ENCODE measurements at regions of chr1 and their contacts with region 1.

Region 1: GRCh38 chr1:174968750-174969244 is 30.9 kb upstream of the CACYBP start:
- DNase-seq: peak in 25 of 35 experiments; percentile 8 to 87 (median 34)
- ATAC-seq: peak; percentile 68 to 74 (median 71)
- H3K4me3 ChIP-seq: peak overlapping the region in 1 of 2 donors; percentile 13
- H3K4me3 Mint-ChIP-seq: peak overlapping the region; percentile 70 to 75 (median 74)
- H3K27ac ChIP-seq: peak overlapping the region; percentile 81
- H3K27ac Mint-ChIP-seq: peak overlapping the region; percentile 93 to 95
- H3K4me1 ChIP-seq: peaks cover 44 to 69% of the 10 kb centered on the region in 2 experiments
- H3K4me1 Mint-ChIP-seq: peaks cover 78 to 82% (median 79%) of the 10 kb centered on the region in 3 donors
- H3K27me3 ChIP-seq: no peaks in the 10 kb centered on the region
- H3K27me3 Mint-ChIP-seq: no peaks in the 10 kb centered on the region

Region 2: GRCh38 chr1:174800216-174800851 is 168.5 kb before region 1 on chr1:
- CTCF ChIA-PET with region 1: interaction called in 1 of 2 experiments, 7 read pairs
- POLR2A ChIA-PET with region 1: interaction called, 4 to 19 read pairs
- DNase-seq: peak in 17 of 35 experiments; percentile 1 to 43 (median 14)
- ATAC-seq: peak; percentile 6 to 14 (median 10)
- H3K4me3 ChIP-seq: peak overlapping the region; percentile 57 to 64
- H3K4me3 Mint-ChIP-seq: no peak overlapping the region
- H3K27ac ChIP-seq: peak overlapping the region; percentile 58
- H3K27ac Mint-ChIP-seq: no peak overlapping the region
- H3K4me1 ChIP-seq: peaks cover 3 to 11% of the 10 kb centered on the region in 2 experiments
- H3K4me1 Mint-ChIP-seq: peaks cover 0 to 16% (median 5%) of the 10 kb centered on the region in 3 donors
- H3K27me3 ChIP-seq: no peaks in the 10 kb centered on the region
- H3K27me3 Mint-ChIP-seq: no peaks in the 10 kb centered on the region

Region 3: DNA sequence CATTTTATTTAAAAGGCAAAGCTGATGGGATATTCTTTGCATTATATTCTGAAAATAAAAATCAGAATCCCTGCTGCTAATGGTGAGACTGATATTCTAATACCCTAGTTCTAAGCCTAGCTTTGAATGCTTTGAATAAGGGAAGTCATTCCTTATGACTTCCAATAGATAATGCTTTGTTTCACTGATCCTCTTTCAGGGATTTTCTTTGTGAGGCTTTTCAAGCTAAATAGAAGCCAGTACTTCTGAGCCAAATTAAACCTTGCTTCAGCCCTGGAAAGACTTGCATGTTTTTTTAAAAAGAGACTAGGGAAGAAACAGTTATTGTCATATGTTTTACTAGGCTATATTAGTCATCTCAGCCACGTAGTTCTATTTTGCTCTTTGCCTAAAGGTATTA is 37.6 kb before region 1 on chr1:
- CTCF ChIA-PET with region 1: no interaction called
- POLR2A ChIA-PET with region 1: no interaction called
- DNase-seq: no peak
- ATAC-seq: no peak
- H3K4me3 ChIP-seq: no peak overlapping the region
- H3K4me3 Mint-ChIP-seq: no peak overlapping the region
- H3K27ac ChIP-seq: no peak overlapping the region
- H3K27ac Mint-ChIP-seq: no peak overlapping the region
- H3K4me1 ChIP-seq: no peaks in the 10 kb centered on the region
- H3K4me1 Mint-ChIP-seq: peaks cover 3 to 6% (median 5%) of the 10 kb centered on the region in 3 donors
- H3K27me3 ChIP-seq: no peaks in the 10 kb centered on the region
- H3K27me3 Mint-ChIP-seq: no peaks in the 10 kb centered on the region

Region 4: GRCh38 chr1:175089136-175089718 is 120.4 kb after region 1 on chr1:
- CTCF ChIA-PET with region 1: no interaction called
- POLR2A ChIA-PET with region 1: no interaction called
- DNase-seq: no peak
- ATAC-seq: no peak
- H3K4me3 ChIP-seq: no peak overlapping the region
- H3K4me3 Mint-ChIP-seq: no peak overlapping the region
- H3K27ac ChIP-seq: no peak overlapping the region
- H3K27ac Mint-ChIP-seq: no peak overlapping the region
- H3K4me1 ChIP-seq: no peaks in the 10 kb centered on the region
- H3K4me1 Mint-ChIP-seq: no peaks in the 10 kb centered on the region
- H3K27me3 ChIP-seq: no peaks in the 10 kb centered on the region
- H3K27me3 Mint-ChIP-seq: no peaks in the 10 kb centered on the region